Activated CD4-positive, alpha-beta memory T cell treated with anti-CD3 and anti-CD28 coated beads, Interleukin-2, amount 10 ng/mL, durations not matched to agents 7 days and 5 days (primary cell): ENCODE measurements at regions of chr10 and their contacts with region 1.

Region 1: DNA sequence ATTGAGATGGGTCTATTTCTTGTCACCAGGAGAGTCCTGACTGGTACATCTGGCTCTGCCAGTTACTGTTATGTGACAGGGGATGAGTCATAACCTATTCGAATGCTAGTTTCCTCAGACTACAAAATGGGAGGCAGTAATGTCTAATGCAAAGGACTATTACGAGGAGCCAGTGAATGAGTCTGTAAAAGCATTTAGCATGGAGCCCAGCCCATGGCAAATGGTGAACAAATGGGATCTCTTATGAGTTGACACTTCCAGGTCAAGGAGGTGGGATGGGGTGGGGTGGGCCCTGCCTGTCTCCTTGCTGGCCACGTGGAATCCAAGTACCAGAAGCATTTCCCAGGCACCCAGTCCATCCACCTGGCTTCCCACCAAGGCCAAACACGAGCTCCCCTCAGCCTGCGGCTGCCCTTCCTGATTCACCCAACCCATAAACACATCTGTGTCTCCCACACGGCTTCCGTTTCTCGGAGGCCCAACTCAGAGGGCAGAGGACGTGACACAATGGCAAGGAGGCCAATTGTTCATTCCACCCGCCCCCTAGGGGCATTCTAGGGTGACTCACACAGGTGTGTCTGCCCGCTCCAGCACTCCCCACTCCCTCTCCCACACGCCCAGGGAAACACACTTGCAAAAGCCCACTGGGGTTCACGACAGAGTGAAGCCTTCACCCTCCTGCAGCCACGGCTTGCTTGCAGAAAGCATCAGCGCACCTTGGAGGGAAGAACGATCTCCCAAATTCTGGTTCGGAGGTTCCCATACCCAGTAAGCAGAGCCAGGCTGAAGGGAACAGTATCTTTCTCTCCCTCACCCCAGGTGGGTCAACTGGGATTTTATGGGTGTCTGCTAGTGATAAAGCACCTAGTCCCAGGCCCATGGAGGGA is 109.8 kb downstream of the SH3PXD2A start:
- DNase-seq: peak; percentile 79
- H3K4me3 Mint-ChIP-seq: peak overlapping the region; percentile 62
- H3K27ac Mint-ChIP-seq: peak overlapping the region; percentile 93
- H3K4me1 Mint-ChIP-seq: peaks cover 57% of the 10 kb centered on the region
- H3K27me3 Mint-ChIP-seq: no peaks in the 10 kb centered on the region

Region 2: GRCh38 chr10:103759100-103759781 is 13.7 kb after region 1 on chr10:
- CTCF ChIA-PET with region 1: interaction called, 67 read pairs
- POLR2A ChIA-PET with region 1: interaction called, 81 read pairs
- DNase-seq: peak; percentile 51
- H3K4me3 Mint-ChIP-seq: no peak overlapping the region
- H3K27ac Mint-ChIP-seq: peak overlapping the region; percentile 75
- H3K4me1 Mint-ChIP-seq: peaks cover 67% of the 10 kb centered on the region
- H3K27me3 Mint-ChIP-seq: no peaks in the 10 kb centered on the region

Region 3: GRCh38 chr10:103859161-103860086 is 113.8 kb after region 1 on chr10:
- CTCF ChIA-PET with region 1: interaction called, 13 read pairs
- POLR2A ChIA-PET with region 1: interaction called, 6 read pairs
- DNase-seq: peak; percentile 73
- H3K4me3 Mint-ChIP-seq: no peak overlapping the region
- H3K27ac Mint-ChIP-seq: no peak overlapping the region
- H3K4me1 Mint-ChIP-seq: peaks cover 8% of the 10 kb centered on the region
- H3K27me3 Mint-ChIP-seq: peaks cover 33% of the 10 kb centered on the region